HepG2 (cell line): ENCODE measurements at regions of chr18 and their contacts with region 1.

Region 1: GRCh38 chr18:47930931-47931717 is 665 bp upstream of the SMAD2 start:
- DNase-seq: peak; percentile 91
- ATAC-seq: peak; percentile 90
- H3K4me3 ChIP-seq: peak overlapping the region; percentile 47 to 87 (median 85); a peak in 5 of 6 replicates
- H3K27ac ChIP-seq: peak overlapping the region; percentile 96
- H3K4me1 ChIP-seq: peaks cover 45% of the 10 kb centered on the region
- H3K27me3 ChIP-seq: no peaks in the 10 kb centered on the region; a peak in 1 of 5 replicates
- CTCF ChIP-seq: no peak
- EP300 ChIP-seq: no peak
- POLR2A ChIP-seq: peak in 1 of 2 experiments; percentile 88; a peak in 2 of 4 replicates
- RAD21 ChIP-seq: peak; percentile 43

Region 2: DNA sequence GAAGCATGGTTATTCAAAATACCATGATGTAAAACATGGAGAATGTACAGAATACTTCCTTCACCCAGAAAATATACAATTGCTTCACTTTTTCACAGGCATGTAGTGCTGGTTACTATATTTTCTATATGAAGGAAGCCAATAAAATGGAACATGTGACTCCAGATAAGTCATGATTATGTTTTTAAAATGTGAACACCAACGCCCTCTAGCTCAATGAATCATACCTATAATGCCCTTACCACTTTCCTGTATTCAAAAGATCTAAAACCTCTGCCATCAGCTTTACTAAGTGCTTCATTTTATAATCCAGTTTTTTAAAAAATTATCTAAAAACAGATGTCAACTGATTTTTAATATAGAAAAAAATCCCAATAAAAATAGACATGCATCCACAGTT is 60.5 kb before region 1 on chr18:
- CTCF ChIA-PET with region 1: no interaction called
- POLR2A ChIA-PET with region 1: no interaction called
- in situ Hi-C with region 1: no loop called
- intact Hi-C with region 1: loop called (anchors 1 kb)
- DNase-seq: no peak
- ATAC-seq: no peak
- H3K4me3 ChIP-seq: no peak overlapping the region
- H3K27ac ChIP-seq: no peak overlapping the region
- H3K4me1 ChIP-seq: peaks cover 32% of the 10 kb centered on the region
- H3K27me3 ChIP-seq: no peaks in the 10 kb centered on the region
- CTCF ChIP-seq: no peak
- EP300 ChIP-seq: no peak
- POLR2A ChIP-seq: no peak
- RAD21 ChIP-seq: no peak

Region 3: GRCh38 chr18:48007955-48008701 is 77.0 kb after region 1 on chr18:
- CTCF ChIA-PET with region 1: no interaction called
- POLR2A ChIA-PET with region 1: no interaction called
- in situ Hi-C with region 1: no loop called
- intact Hi-C with region 1: loop called (anchors 5 kb)
- DNase-seq: peak; percentile 42
- ATAC-seq: peak; percentile 88
- H3K4me3 ChIP-seq: peak overlapping the region; percentile 56 to 77 (median 61)
- H3K27ac ChIP-seq: no peak overlapping the region
- H3K4me1 ChIP-seq: peaks cover 8% of the 10 kb centered on the region
- H3K27me3 ChIP-seq: peaks cover 2 to 30% of the 10 kb centered on the region in 2 experiments; a peak in 4 of 5 replicates
- CTCF ChIP-seq: peak; percentile 56
- EP300 ChIP-seq: no peak
- POLR2A ChIP-seq: no peak
- RAD21 ChIP-seq: 0 out of 2 replicates have a peak, but pooled peaks have one; percentile 8